ENCODE measurements at regions of chr2 and their contacts with region 1.

Region 1: GRCh38 chr2:227774011-227774624 is 28.4 kb downstream of the SCYGR8 start:
- DNase-seq: peak; percentile 51
- CTCF ChIP-seq: peak; percentile 17

Region 2: DNA sequence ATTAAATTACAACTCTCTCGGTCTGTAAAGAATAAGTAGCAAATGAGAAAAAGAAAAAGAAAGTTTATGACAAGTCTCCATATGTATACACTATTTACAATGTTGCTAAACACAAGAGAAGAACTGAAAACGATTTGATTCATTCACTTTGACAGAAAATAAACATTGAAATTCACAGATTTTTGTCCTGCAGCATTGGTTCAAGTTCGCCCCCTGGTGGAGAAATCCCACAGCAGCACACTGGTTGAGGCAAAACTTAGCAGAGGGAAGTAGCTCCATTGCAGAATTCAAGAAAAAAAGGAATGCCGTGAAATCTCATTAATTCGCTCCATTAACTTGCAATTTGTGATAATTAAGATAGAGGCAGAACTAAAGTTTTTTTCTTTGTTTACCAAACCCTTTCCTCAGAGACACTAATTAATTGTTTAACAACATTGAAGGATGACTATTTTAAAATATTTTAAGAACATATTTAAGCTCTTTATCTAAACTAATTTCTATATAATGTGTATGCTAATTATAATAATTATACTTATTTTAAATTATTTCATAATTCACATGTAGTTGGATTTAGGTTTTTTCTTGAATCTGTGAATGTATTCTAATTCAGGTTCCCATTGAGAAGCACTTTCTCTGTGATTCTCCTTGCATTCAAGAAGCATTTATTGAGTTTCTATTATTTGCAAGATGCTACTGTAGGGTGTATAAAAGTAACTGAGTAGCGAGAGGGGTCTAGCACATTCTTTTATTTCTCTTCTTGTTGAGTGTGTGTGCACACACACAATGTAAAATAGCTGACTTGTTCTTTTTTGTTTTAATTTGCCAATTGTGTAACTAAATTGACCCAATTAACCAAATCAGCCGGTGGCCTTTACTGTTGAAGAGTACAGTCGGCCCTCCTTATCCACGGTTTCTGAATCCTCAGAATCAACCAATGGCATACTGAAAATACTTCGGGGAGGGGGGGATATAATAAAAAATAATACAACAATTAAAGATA is 535.6 kb before region 1 on chr2:
- in situ Hi-C with region 1: no loop called
- DNase-seq: peak; percentile 52
- CTCF ChIP-seq: peak; percentile 82

Region 3: DNA sequence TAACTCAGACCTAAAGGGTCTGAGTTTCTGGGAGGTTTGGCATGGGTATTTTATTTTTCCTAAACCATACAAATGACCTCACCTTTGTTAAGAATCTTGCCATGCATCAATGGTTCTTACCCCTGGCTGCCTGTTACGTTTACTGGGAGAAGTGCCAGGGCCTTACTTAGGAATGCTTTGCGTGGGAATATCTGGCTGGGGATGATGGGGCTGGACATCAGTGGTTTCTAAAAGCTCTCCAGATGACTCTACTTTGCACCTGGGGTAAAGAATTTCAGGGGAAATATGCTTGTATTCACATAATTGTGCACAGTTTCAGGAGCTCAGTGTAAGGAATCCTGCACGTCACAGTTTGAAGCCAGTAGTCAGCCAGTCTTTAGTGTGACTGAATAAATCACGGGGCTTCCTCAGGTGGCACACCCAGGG is 79.1 kb after region 1 on chr2:
- in situ Hi-C with region 1: loop called (anchors 10 kb)
- DNase-seq: no peak
- CTCF ChIP-seq: no peak

Region 4: GRCh38 chr2:228094377-228094921 is 320.3 kb after region 1 on chr2:
- in situ Hi-C with region 1: no loop called
- DNase-seq: no peak
- CTCF ChIP-seq: no peak

Measured in GM13976 (cell line).